Common myeloid progenitor, CD34-positive (primary cell): ENCODE measurements at regions of chr1 and their contacts with region 1.

Region 1: DNA sequence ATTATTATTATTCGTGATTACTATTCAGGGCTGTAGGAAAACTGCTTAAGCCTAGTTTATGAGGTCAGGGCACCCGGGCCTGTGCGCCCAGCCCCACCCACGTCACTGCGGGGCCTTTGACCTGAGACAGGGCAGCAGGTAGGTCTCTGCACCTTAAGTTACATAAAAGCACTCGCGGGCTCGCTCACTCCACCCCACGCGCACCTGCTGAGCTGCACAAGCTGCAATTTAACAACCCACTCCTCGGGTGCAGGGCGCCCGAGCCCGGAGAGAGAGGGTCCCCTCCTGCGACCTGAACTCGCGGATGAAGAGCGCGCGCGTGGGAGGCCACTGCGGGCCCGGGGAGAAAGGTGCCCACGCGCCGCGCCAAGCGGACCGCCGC is 477 bp downstream of the ICMT start:
- DNase-seq: peak in 1 of 3 donors; percentile 23
- H3K4me3 ChIP-seq: peak overlapping the region; percentile 44 to 95 (median 76)
- H3K27ac ChIP-seq: peak overlapping the region in 1 of 2 experiments; percentile 66
- H3K4me1 ChIP-seq: peaks cover 4 to 16% (median 13%) of the 10 kb centered on the region in 4 experiments
- H3K27me3 ChIP-seq: peaks cover 0 to 30% (median under 1%) of the 10 kb centered on the region in 5 experiments

Region 2: DNA sequence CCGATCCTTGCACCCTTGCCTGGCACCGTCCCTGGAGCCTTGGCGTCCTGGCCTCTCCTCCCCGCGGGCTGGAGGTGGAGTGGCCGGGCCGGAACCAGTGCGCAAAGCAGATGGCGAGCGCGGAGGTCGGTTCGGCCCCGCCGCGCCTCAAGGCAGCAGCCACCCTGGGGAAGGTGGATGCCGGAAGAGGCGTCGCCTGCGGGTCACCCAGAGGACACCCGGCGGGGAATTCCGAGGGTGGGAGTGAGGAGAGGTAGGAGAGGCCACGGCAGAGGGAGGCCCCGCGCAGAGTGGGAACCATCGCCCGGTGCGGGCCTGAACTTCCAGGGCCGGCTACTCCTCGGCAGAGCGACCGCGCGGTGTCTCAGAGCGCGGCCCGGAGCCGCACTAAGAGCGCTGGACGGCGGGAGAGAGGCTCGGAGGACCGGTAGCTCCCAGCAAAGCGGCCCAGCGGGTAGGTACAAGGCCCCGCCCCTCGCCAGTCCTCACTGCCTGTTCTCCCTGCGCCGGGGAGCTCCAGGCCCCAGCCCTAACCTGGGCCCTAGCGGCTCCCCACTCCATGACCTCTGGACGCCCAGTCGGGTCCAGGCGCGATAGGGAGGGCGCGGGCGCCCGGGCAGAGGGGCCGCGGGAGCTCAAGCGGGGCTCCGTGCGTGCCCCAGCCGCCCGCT is 29.3 kb before region 1 on chr1 and contains the start of gene RNF207:
- CTCF ChIA-PET with region 1: interaction called, 12 read pairs
- POLR2A ChIA-PET with region 1: no interaction called
- DNase-seq: peak in 2 of 3 donors; percentile 59
- H3K4me3 ChIP-seq: peak within 1 kb of the TSS in 6 of 7 experiments; percentile 35 to 70 (median 52)
- H3K27ac ChIP-seq: peak within 1 kb of the TSS in 1 of 2 experiments; percentile 71
- H3K4me1 ChIP-seq: peaks cover 0 to 32% (median 28%) of the 10 kb centered on the region in 4 experiments
- H3K27me3 ChIP-seq: peaks cover 4 to 59% (median 16%) of the 10 kb centered on the region in 5 experiments